ENCODE measurements at regions of chr12 and their contacts with region 1.

Region 1: DNA sequence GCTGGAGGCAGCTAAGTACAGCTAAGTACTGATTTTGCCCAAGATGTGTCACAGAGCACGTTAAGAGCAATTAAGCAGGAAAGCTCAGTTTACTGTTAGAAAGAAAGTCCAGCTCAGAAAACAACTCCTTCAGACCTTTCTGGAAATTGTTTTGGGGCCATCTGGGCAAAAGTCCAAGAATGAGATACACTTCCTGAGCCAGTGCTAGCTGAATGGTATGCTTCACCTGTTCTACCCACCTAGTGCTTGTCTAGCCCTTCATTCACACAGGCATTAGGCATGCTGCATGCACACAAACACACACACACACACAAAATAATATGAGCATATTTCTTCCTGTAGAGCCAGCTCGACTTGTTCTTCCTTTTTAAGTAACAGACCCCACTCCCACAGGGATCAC is 6.6 kb upstream of the IKZF4 start:
- H3K4me3 ChIP-seq: no peak overlapping the region
- H3K27ac ChIP-seq: no peak overlapping the region
- H3K4me1 ChIP-seq: no peaks in the 10 kb centered on the region
- CTCF ChIP-seq: no peak

Region 2: DNA sequence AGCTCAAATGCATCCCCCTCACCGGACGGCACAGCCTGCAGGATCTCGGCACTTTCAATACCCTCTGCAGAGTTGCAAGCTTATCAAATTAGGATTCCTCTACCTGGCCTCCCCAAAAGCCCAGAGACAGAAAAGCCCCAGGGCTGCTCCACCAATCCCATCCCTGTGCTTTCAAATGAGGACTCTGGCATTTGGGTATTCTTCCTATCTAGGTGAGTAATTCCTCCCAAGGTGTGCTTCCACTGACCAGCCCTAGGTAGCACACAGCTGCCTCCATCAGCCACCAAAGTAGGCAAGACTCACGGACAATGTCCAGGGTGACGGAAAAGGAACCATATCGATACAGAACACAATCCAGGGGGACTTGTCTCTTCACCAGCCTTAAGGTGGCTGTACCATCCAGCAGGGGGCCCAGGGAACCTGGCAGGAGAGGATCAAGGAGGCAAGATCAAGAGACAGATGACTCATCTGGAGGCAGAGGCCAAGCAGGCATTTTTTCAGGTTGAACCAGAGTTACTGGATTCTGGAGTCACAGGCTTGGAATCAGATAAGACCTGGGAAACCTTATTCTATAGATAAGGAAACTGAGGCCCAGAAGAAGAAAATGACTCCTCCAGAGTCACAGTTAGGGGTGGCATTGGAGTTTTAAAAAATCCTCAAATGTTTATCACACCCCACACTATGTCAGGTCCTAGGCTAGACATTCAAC is 58.3 kb before region 1 on chr12:
- CTCF ChIA-PET with region 1: no interaction called
- POLR2A ChIA-PET with region 1: no interaction called
- H3K4me3 ChIP-seq: no peak overlapping the region
- H3K27ac ChIP-seq: no peak overlapping the region
- H3K4me1 ChIP-seq: no peaks in the 10 kb centered on the region
- CTCF ChIP-seq: peak; percentile 50

Region 3: DNA sequence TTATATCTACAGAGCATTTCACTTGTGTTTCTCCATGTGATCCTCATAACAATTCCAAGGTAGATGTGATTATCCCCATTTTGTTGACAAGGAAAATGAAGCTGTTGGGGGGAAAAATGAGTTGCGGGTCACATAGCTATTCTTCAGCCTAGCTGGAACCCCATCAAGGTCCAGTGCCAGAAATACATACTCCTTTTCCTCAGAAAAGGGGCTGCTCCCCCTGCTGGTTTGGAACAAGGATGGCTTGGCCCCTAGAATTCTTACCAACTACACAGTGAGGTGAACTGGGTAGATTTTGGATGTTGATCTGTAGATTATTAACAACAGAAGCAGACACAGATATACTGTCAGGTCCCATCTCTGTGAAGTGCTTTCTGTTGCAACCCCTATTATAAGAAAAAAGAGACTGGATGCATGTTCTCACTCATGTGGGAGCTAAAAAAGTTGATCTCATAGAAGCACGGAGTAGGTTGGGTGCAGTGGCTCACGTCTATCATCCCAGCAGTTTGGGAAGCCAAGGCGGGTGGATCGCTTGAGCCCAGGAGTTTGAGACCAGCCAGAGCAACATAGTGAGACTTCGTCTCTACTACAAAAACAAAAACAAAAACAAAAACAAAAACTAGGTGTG is 15.6 kb after region 1 on chr12:
- CTCF ChIA-PET with region 1: interaction called, 10 read pairs
- POLR2A ChIA-PET with region 1: no interaction called
- H3K4me3 ChIP-seq: no peak overlapping the region
- H3K27ac ChIP-seq: no peak overlapping the region
- H3K4me1 ChIP-seq: no peaks in the 10 kb centered on the region
- CTCF ChIP-seq: no peak

Measured in HEK293 (cell line).